Sigmoid colon (tissue), 7 donors: ENCODE measurements at regions of chr5 and their contacts with region 1.

Region 1: DNA sequence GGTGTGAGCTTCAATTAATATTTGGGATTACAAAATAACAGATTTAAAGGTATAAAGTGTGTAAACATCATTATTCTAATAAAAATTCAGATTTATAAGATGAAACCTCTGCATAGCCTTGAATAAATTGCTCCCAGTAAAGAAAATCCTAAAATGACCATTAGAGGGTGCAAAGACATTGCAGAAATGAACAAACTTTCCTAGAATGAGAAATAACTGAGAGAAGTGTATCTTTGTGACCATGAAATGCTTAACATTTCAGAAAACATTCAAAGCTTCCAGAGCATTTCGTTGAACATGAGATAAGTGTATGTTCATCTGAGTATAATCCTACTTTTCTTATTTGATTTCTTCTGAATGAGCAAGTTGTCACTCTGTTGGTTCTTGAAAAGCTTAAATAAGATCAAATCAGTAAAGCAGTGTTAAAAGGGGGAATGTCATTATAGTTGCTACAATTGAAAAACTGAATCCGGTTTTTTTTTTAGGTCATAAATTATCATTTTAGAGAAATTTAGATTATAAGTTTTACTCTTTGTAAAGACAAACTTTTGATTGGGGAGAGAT is 24.7 kb upstream of the NUDT12 start:
- DNase-seq: no peak
- H3K4me3 ChIP-seq: no peak overlapping the region
- H3K27ac ChIP-seq: no peak overlapping the region
- H3K4me1 ChIP-seq: no peaks in the 10 kb centered on the region
- H3K27me3 ChIP-seq: no peaks in the 10 kb centered on the region
- CTCF ChIP-seq: peak in 2 of 4 experiments; percentile 33 to 36
- EP300 ChIP-seq: no peak
- POLR2A ChIP-seq: no peak

Region 2: GRCh38 chr5:102792705-102793104 is 794.6 kb before region 1 on chr5:
- intact Hi-C with region 1: no loop called
- DNase-seq: no peak
- H3K4me3 ChIP-seq: no peak overlapping the region
- H3K27ac ChIP-seq: no peak overlapping the region
- H3K4me1 ChIP-seq: peaks cover 0 to 51% (median 12%) of the 10 kb centered on the region in 4 donors
- H3K27me3 ChIP-seq: no peaks in the 10 kb centered on the region
- CTCF ChIP-seq: no peak
- EP300 ChIP-seq: no peak
- POLR2A ChIP-seq: no peak

Region 3: GRCh38 chr5:104178829-104179456 is 591.7 kb after region 1 on chr5:
- intact Hi-C with region 1: loop called (anchors 5 kb)
- DNase-seq: no peak
- H3K4me3 ChIP-seq: no peak overlapping the region
- H3K27ac ChIP-seq: no peak overlapping the region
- H3K4me1 ChIP-seq: no peaks in the 10 kb centered on the region
- H3K27me3 ChIP-seq: no peaks in the 10 kb centered on the region
- CTCF ChIP-seq: peak in 3 of 4 experiments; percentile 32 to 53 (median 38)
- EP300 ChIP-seq: no peak
- POLR2A ChIP-seq: no peak